ENCODE measurements at regions of chr1 and their contacts with region 1.

Region 1: GRCh38 chr1:111619635-111620440 is at the start of gene RAP1A:
- DNase-seq: peak; percentile 87 to 91 (median 91)
- H3K4me3 ChIP-seq: peak within 1 kb of the TSS; percentile 55 to 91 (median 84)
- H3K27ac ChIP-seq: peak within 1 kb of the TSS; percentile 69 to 88
- H3K4me1 ChIP-seq: peaks cover 35 to 72% (median 57%) of the 10 kb centered on the region in 4 experiments
- H3K27me3 ChIP-seq: no peaks in the 10 kb centered on the region

Region 2: GRCh38 chr1:111222308-111223125 is 397.3 kb before region 1 on chr1:
- CTCF ChIA-PET with region 1: no interaction called
- POLR2A ChIA-PET with region 1: no interaction called
- DNase-seq: peak in 2 of 3 donors; percentile 57 to 58
- H3K4me3 ChIP-seq: peak overlapping the region in 3 of 7 experiments; percentile 13 to 45 (median 33)
- H3K27ac ChIP-seq: peak overlapping the region in 1 of 2 experiments; percentile 31
- H3K4me1 ChIP-seq: peaks cover 22 to 46% (median 36%) of the 10 kb centered on the region in 4 experiments
- H3K27me3 ChIP-seq: no peaks in the 10 kb centered on the region

Region 3: GRCh38 chr1:111516005-111516535 is 103.8 kb before region 1 on chr1:
- CTCF ChIA-PET with region 1: interaction called, 18 read pairs
- POLR2A ChIA-PET with region 1: interaction called, 4 read pairs
- DNase-seq: peak; percentile 98 to 100 (median 99)
- H3K4me3 ChIP-seq: peak overlapping the region; percentile 42 to 73 (median 62)
- H3K27ac ChIP-seq: peak overlapping the region; percentile 51 to 78
- H3K4me1 ChIP-seq: peaks cover 21 to 79% (median 76%) of the 10 kb centered on the region in 4 experiments
- H3K27me3 ChIP-seq: no peaks in the 10 kb centered on the region

Region 4: GRCh38 chr1:111603979-111604378 is 15.9 kb before region 1 on chr1:
- CTCF ChIA-PET with region 1: interaction called, 11 read pairs
- POLR2A ChIA-PET with region 1: no interaction called
- DNase-seq: no peak
- H3K4me3 ChIP-seq: no peak overlapping the region
- H3K27ac ChIP-seq: no peak overlapping the region
- H3K4me1 ChIP-seq: peaks cover 0 to 20% (median 0%) of the 10 kb centered on the region in 4 experiments
- H3K27me3 ChIP-seq: no peaks in the 10 kb centered on the region

Region 5: DNA sequence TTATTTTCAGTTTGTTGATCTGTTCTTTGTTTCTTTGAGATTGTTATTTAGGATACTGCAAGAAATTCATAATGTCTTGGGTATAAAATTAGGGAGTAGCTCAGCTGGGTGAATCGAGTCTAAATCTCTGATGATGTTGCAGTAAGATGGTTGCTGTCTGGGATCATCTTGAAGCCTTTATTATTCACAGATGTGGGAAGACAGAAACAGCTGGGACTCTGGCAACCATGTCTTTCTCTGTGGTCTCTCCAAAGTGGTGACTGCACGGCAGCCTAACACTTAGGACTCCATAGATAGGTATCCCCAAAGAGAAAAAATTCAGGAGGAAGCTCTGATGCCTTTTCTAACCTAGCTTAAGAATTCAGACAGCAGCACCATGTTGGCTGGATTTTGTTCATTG is 52.5 kb after region 1 on chr1:
- CTCF ChIA-PET with region 1: no interaction called
- POLR2A ChIA-PET with region 1: no interaction called
- DNase-seq: no peak
- H3K4me3 ChIP-seq: no peak overlapping the region
- H3K27ac ChIP-seq: no peak overlapping the region
- H3K4me1 ChIP-seq: peaks cover 8 to 18% (median 10%) of the 10 kb centered on the region in 4 experiments
- H3K27me3 ChIP-seq: no peaks in the 10 kb centered on the region

Region 6: GRCh38 chr1:111704776-111705175 is 84.9 kb after region 1 on chr1:
- CTCF ChIA-PET with region 1: no interaction called
- POLR2A ChIA-PET with region 1: no interaction called
- DNase-seq: no peak
- H3K4me3 ChIP-seq: no peak overlapping the region
- H3K27ac ChIP-seq: no peak overlapping the region
- H3K4me1 ChIP-seq: no peaks in the 10 kb centered on the region
- H3K27me3 ChIP-seq: no peaks in the 10 kb centered on the region